ENCODE measurements at regions of chr7 and their contacts with region 1.

Region 1: DNA sequence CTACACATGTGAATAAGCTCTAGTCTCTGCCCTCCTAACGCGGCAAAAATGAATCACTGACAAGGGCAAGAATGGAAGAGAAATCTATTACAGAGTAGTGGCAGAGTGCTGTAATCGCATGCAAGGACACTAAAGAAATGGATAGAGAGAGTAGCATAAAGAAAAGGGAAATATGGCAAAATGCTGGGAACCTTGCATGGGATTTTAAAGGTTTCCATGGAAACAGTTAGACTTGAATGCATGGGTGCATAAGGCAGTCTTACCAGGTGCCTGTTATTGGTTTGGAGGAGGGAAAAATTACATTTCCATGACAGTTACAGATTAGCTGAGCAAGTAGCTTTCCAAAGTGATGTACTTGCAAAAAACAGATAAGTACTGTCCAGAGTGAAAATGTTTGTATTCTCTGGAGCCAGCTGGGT is 233.4 kb downstream of the PTN start:
- DNase-seq: no peak
- H3K4me3 ChIP-seq: no peak overlapping the region
- H3K27ac ChIP-seq: no peak overlapping the region
- H3K4me1 ChIP-seq: no peaks in the 10 kb centered on the region
- H3K27me3 ChIP-seq: no peaks in the 10 kb centered on the region
- CTCF ChIP-seq: no peak

Region 2: GRCh38 chr7:136953386-136953785 is 156.7 kb before region 1 on chr7:
- intact Hi-C with region 1: loop called (anchors 2 kb)
- DNase-seq: no peak
- H3K4me3 ChIP-seq: no peak overlapping the region
- H3K27ac ChIP-seq: no peak overlapping the region
- H3K4me1 ChIP-seq: peaks cover 0 to 8% (median 2%) of the 10 kb centered on the region in 4 donors
- H3K27me3 ChIP-seq: no peaks in the 10 kb centered on the region
- CTCF ChIP-seq: no peak

Region 3: DNA sequence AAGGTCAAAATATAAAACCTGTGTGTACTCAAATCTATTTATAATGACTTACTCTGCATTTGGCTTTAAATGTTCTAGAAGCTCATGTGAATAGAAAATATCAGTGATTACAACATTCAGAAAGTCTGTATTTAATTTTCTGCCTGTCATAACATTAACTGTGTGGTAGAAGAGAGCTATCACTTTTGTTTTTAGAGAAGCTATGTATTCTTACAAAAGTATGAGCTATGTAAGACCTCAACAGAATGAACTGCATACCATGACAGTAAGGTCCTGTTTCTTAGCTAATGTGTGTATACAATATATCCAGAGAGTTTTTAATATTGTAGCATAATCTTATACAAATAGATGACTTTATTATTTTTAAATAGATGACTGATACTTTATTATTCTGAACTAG is 171.9 kb after region 1 on chr7:
- intact Hi-C with region 1: no loop called
- DNase-seq: no peak
- H3K4me3 ChIP-seq: no peak overlapping the region
- H3K27ac ChIP-seq: no peak overlapping the region
- H3K4me1 ChIP-seq: no peaks in the 10 kb centered on the region
- H3K27me3 ChIP-seq: no peaks in the 10 kb centered on the region
- CTCF ChIP-seq: no peak